CD8-positive, alpha-beta T cell (primary cell): ENCODE measurements at regions of chr4 and their contacts with region 1.

Region 1: DNA sequence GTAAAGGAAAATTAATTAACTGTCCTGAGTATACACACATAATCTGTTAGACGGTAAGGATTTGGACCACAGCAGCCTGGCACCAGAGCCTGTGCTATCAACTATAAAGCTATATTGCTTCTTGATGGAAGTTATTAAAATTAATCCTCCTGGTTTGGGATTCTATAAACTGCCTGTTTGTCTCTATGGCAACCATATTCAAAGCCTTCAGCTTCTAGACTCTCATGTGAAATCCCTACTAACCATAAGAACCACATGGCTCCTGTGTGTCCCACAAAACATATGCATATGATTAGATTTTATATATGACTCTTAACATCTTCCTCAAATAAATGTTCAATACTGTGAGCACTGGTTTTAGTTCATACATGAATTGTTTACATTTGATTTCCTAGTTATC is 380.8 kb downstream of the ANKRD50 start:
- DNase-seq: no peak
- ATAC-seq: no peak
- H3K4me3 ChIP-seq: no peak overlapping the region
- H3K4me3 Mint-ChIP-seq: no peak overlapping the region
- H3K27ac ChIP-seq: no peak overlapping the region
- H3K27ac Mint-ChIP-seq: no peak overlapping the region
- H3K4me1 ChIP-seq: no peaks in the 10 kb centered on the region
- H3K4me1 Mint-ChIP-seq: no peaks in the 10 kb centered on the region
- H3K27me3 ChIP-seq: no peaks in the 10 kb centered on the region
- H3K27me3 Mint-ChIP-seq: no peaks in the 10 kb centered on the region
- CTCF ChIP-seq: no peak

Region 2: GRCh38 chr4:124053872-124054538 is 277.8 kb before region 1 on chr4:
- CTCF ChIA-PET with region 1: no interaction called
- POLR2A ChIA-PET with region 1: no interaction called
- intact Hi-C with region 1: no loop called
- DNase-seq: no peak
- ATAC-seq: no peak
- H3K4me3 ChIP-seq: no peak overlapping the region
- H3K4me3 Mint-ChIP-seq: no peak overlapping the region
- H3K27ac ChIP-seq: no peak overlapping the region
- H3K27ac Mint-ChIP-seq: no peak overlapping the region
- H3K4me1 ChIP-seq: no peaks in the 10 kb centered on the region
- H3K4me1 Mint-ChIP-seq: no peaks in the 10 kb centered on the region
- H3K27me3 ChIP-seq: no peaks in the 10 kb centered on the region
- H3K27me3 Mint-ChIP-seq: no peaks in the 10 kb centered on the region
- CTCF ChIP-seq: no peak

Region 3: GRCh38 chr4:124295413-124295812 is 36.4 kb before region 1 on chr4:
- CTCF ChIA-PET with region 1: no interaction called
- POLR2A ChIA-PET with region 1: no interaction called
- intact Hi-C with region 1: no loop called
- DNase-seq: no peak
- ATAC-seq: no peak
- H3K4me3 ChIP-seq: no peak overlapping the region
- H3K4me3 Mint-ChIP-seq: no peak overlapping the region
- H3K27ac ChIP-seq: no peak overlapping the region
- H3K27ac Mint-ChIP-seq: no peak overlapping the region
- H3K4me1 ChIP-seq: no peaks in the 10 kb centered on the region
- H3K4me1 Mint-ChIP-seq: no peaks in the 10 kb centered on the region
- H3K27me3 ChIP-seq: no peaks in the 10 kb centered on the region
- H3K27me3 Mint-ChIP-seq: peaks cover 2% of the 10 kb centered on the region
- CTCF ChIP-seq: no peak

Region 4: DNA sequence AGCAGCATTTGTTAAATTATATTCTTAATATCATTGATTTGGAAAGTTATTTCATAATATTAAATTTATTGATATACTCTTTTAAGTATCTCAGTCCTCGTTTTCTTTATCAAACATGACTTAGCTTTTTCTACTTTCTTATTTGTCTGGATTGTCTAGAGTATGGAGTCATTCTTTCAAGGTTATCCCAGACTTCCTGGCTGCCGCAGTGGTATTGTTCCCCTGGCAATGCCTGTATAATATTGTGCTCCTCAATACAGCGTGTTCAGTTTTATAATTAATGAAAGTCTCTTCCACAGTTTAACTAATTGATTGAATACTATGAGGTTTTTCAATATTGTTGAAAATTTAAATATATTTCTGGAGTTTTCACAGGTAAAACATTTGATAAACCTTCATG is 69.8 kb after region 1 on chr4:
- CTCF ChIA-PET with region 1: no interaction called
- POLR2A ChIA-PET with region 1: no interaction called
- intact Hi-C with region 1: no loop called
- DNase-seq: no peak
- ATAC-seq: no peak
- H3K4me3 ChIP-seq: no peak overlapping the region
- H3K4me3 Mint-ChIP-seq: no peak overlapping the region
- H3K27ac ChIP-seq: no peak overlapping the region
- H3K27ac Mint-ChIP-seq: no peak overlapping the region
- H3K4me1 ChIP-seq: no peaks in the 10 kb centered on the region
- H3K4me1 Mint-ChIP-seq: no peaks in the 10 kb centered on the region
- H3K27me3 ChIP-seq: no peaks in the 10 kb centered on the region
- H3K27me3 Mint-ChIP-seq: no peaks in the 10 kb centered on the region
- CTCF ChIP-seq: no peak

Region 5: GRCh38 chr4:125283707-125284279 is 952.0 kb after region 1 on chr4:
- CTCF ChIA-PET with region 1: interaction called, 4 read pairs
- POLR2A ChIA-PET with region 1: no interaction called
- intact Hi-C with region 1: loop called in 1 of 2 experiments (anchors 2 kb)
- DNase-seq: peak in 1 of 9 experiments; percentile 1
- ATAC-seq: no peak
- H3K4me3 ChIP-seq: no peak overlapping the region
- H3K4me3 Mint-ChIP-seq: no peak overlapping the region
- H3K27ac ChIP-seq: no peak overlapping the region
- H3K27ac Mint-ChIP-seq: no peak overlapping the region
- H3K4me1 ChIP-seq: no peaks in the 10 kb centered on the region
- H3K4me1 Mint-ChIP-seq: no peaks in the 10 kb centered on the region
- H3K27me3 ChIP-seq: no peaks in the 10 kb centered on the region
- H3K27me3 Mint-ChIP-seq: no peaks in the 10 kb centered on the region
- CTCF ChIP-seq: no peak